ENCODE measurements at regions of chr7 and their contacts with region 1.

Region 1: GRCh38 chr7:22361795-22362194 is 4.8 kb upstream of the RAPGEF5 start:
- DNase-seq: no peak
- ATAC-seq: no peak
- H3K4me3 ChIP-seq: no peak overlapping the region
- H3K27ac ChIP-seq: no peak overlapping the region
- H3K4me1 ChIP-seq: no peaks in the 10 kb centered on the region; a peak in 1 of 5 replicates
- H3K27me3 ChIP-seq: no peaks in the 10 kb centered on the region
- CTCF ChIP-seq: no peak
- EP300 ChIP-seq: no peak
- POLR2A ChIP-seq: no peak
- RAD21 ChIP-seq: no peak

Region 2: DNA sequence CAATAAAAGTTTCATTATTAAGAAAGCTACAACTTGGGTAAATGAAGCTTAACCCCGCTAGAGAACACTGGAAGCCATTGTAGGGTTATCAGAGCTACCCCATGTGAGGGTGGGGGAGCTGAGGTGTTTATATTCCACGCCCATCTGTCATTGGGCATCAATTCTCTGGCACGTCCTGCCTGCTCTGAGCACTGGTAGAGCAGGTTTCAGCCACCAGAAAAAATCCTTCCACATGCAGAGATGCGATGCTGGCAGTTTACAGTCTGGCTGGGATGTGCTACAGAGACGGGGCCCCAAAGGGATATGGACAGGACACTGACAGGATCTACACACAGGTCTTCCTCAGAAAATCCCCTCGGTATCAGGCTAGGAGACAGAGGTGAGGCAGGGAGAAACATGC is 11.1 kb after region 1 on chr7:
- CTCF ChIA-PET with region 1: no interaction called
- POLR2A ChIA-PET with region 1: interaction called, 16 read pairs
- in situ Hi-C with region 1: no loop called
- intact Hi-C with region 1: no loop called
- DNase-seq: peak in 1 of 4 experiments; percentile 14
- ATAC-seq: peak; percentile 53
- H3K4me3 ChIP-seq: no peak overlapping the region
- H3K27ac ChIP-seq: peak overlapping the region; percentile 53
- H3K4me1 ChIP-seq: peaks cover 0 to 23% of the 10 kb centered on the region in 2 experiments; a peak in 4 of 5 replicates
- H3K27me3 ChIP-seq: no peaks in the 10 kb centered on the region
- CTCF ChIP-seq: no peak
- EP300 ChIP-seq: no peak
- POLR2A ChIP-seq: no peak
- RAD21 ChIP-seq: no peak

Measured in K562 (cell line).